Posterior cingulate gyrus (tissue), 11 donors: ENCODE measurements at regions of chr9 and their contacts with region 1.

Region 1: DNA sequence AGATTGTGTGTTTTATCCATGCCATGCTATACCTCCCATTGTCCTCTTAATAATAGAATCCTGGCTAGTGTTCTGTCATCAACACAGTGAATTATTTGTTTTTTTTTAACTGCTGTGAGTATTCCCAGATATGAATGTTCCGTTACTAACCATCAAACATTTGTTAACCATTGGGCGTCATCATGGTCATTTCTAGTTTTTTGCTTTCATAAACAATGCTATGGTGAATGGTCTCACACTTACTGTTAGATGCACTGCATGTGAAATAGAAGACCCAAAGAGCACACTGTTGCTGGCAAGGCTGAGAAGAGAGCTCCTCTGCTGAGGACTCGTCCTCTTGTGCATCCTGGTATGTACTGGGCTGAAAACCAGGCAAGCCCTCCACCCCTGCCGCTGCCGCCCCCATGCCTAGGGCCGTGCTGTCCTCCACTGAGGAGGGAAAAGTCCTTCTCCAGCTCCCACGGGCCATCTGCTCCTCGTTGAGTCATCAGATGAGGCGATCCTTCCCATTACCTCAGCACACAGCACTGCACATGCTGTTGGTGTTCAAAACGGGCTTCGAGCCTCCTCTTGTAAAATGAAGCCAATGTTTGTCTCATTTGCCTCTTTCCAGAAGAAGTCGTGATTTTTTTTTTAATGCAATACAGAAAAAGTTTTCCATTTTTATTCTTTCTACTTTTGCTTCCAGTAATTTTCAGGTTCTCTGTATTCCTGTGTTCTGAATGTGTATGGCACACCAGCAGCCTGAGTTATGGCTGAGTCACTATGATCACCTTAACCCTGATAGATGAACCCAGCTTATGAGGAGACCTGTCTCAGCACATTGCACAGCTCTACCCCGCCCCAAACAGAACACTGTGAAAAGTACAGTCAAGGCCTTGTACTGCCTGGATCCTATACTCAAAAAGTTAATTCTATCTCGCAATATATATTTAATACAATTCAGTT is 219.0 kb downstream of the AOPEP start:
- DNase-seq: peak; percentile 47 to 97 (median 78)

Region 2: DNA sequence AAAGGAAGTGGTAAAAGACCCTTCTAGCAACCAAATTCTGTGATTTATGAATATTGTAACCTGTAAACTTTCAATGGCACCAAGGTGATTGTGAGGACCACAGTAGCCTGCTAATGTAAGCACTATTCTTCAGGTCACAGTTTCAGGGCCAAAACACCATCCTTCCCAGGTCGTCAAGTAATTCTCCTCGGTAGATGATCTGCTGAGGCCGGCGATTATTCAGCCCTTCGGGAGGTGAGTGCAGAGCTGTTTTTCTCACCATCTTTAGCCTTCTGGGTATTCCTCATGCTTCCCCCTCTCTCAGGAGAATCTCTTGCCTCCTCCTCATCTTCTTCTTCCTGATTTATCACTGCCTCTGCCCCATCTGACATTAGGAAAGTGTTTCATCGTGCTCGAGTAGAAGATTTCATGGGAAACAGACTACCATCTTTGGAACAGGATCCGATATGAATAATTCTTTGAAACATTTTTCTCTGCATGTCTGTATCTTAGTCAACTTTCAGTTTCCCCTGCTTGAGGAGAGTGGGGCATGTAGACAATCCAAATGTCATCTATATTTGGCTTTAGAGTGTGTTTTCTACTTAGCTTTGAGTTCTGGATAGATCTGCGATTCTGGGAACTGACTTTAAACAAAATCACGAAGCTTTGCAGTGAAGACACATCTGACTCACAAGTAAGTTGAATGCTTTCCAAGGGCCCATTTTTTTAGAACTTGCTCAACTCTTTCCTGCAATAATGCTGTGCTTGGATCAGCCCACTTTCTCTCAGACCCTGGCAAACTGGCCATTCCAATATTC is 45.1 kb before region 1 on chr9:
- intact Hi-C with region 1: loop called (anchors 5 kb)
- DNase-seq: no peak

Region 3: GRCh38 chr9:95131023-95131943 is 185.8 kb after region 1 on chr9:
- intact Hi-C with region 1: no loop called
- DNase-seq: peak in 9 of 10 donors; percentile 55 to 96 (median 82)

Region 4: GRCh38 chr9:95284150-95285080 is 338.9 kb after region 1 on chr9:
- intact Hi-C with region 1: no loop called
- DNase-seq: no peak

Region 5: GRCh38 chr9:95623640-95624039 is 678.2 kb after region 1 on chr9:
- intact Hi-C with region 1: no loop called
- DNase-seq: no peak